ENCODE measurements at regions of chr1 and their contacts with region 1.

Region 1: DNA sequence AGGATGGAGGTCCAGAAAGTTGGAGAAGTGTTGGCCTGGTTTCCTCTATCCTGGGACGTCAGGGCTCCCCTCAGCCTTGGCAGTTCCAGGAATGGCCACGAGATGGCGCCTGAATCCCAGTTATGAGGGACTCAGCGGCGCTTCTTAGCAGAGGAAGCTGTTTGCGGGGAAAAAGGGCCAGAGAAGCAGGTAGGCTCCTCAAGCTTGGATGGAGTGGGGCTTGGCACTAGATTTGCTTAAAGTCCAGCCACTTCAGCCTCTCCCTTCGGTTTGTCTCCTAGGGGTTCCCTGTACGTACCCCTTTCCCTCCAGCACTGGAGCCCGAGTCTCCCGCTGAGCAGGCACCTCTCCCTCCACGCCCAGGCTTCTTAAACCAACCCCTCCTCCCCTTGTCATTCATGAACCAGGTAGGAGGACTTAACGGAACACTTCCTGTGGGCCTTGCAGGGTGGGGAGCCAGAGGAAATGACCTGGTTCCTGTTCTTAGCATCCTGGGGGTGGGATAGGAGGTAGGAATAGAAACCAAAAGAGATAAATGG is 32.0 kb upstream of the TENT5B start:
- DNase-seq: peak; percentile 84 to 91 (median 89)
- ATAC-seq: peak; percentile 93
- H3K4me3 ChIP-seq: no peak overlapping the region
- H3K27ac ChIP-seq: no peak overlapping the region
- H3K4me1 ChIP-seq: peaks cover 3 to 5% of the 10 kb centered on the region in 2 experiments; a peak in 2 of 5 replicates
- H3K27me3 ChIP-seq: peaks cover 0 to 5% of the 10 kb centered on the region in 2 experiments; a peak in 1 of 5 replicates
- CTCF ChIP-seq: peak; percentile 97 to 99 (median 98)
- EP300 ChIP-seq: no peak
- POLR2A ChIP-seq: no peak
- RAD21 ChIP-seq: peak; percentile 97 to 100

Region 2: GRCh38 chr1:26961826-26962225 is 82.9 kb before region 1 on chr1:
- CTCF ChIA-PET with region 1: interaction called, 4 read pairs
- POLR2A ChIA-PET with region 1: interaction called, 4 read pairs
- in situ Hi-C with region 1: no loop called
- intact Hi-C with region 1: loop called (anchors 1 kb)
- DNase-seq: no peak
- ATAC-seq: no peak
- H3K4me3 ChIP-seq: no peak overlapping the region
- H3K27ac ChIP-seq: no peak overlapping the region
- H3K4me1 ChIP-seq: peaks cover 9 to 14% of the 10 kb centered on the region in 2 experiments; a peak in 4 of 5 replicates
- H3K27me3 ChIP-seq: peaks cover 5 to 21% of the 10 kb centered on the region in 2 experiments; a peak in 4 of 5 replicates
- CTCF ChIP-seq: no peak
- EP300 ChIP-seq: no peak
- POLR2A ChIP-seq: no peak
- RAD21 ChIP-seq: no peak

Region 3: DNA sequence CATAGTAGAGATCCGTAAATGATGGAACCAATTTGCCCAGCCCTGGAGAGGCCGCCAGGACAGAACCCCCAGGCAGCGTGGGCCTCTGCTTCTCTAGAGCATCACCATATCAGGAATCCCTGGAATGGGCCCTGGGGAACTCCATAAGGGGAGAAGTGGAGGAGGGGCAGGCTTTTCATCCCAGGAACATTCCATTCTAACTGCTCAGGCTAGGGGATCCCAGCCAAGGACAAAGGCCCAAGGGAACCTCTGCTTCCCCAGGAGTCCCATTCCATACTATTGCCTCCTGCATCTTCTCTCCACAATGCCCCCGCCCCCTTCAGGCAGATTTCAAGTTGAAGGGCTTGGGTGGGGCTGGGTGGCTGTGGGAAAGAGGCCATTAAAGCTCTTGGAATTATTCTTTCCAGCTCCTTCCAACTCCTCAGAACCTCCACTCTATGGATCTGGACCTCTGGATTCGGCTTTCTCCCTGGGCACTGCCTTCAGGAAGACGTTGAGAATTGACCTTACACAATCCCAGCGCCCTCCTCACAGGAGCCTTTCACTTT is 45.2 kb before region 1 on chr1:
- CTCF ChIA-PET with region 1: interaction called, 20 read pairs
- POLR2A ChIA-PET with region 1: interaction called, 3 read pairs
- in situ Hi-C with region 1: loop called (anchors 5 kb)
- intact Hi-C with region 1: loop called (anchors 1 kb)
- DNase-seq: no peak
- ATAC-seq: no peak
- H3K4me3 ChIP-seq: no peak overlapping the region
- H3K27ac ChIP-seq: no peak overlapping the region
- H3K4me1 ChIP-seq: peaks cover 14 to 17% of the 10 kb centered on the region in 2 experiments
- H3K27me3 ChIP-seq: peaks cover 2 to 9% of the 10 kb centered on the region in 2 experiments; a peak in 4 of 5 replicates
- CTCF ChIP-seq: no peak
- EP300 ChIP-seq: no peak
- POLR2A ChIP-seq: no peak
- RAD21 ChIP-seq: no peak

Region 4: GRCh38 chr1:27097484-27097917 is 52.8 kb after region 1 on chr1:
- CTCF ChIA-PET with region 1: interaction called, 227 read pairs
- POLR2A ChIA-PET with region 1: interaction called, 16 read pairs
- in situ Hi-C with region 1: loop called (anchors 5 kb)
- intact Hi-C with region 1: loop called (anchors 1 kb)
- DNase-seq: peak; percentile 86 to 90 (median 88)
- ATAC-seq: peak; percentile 84
- H3K4me3 ChIP-seq: no peak overlapping the region
- H3K27ac ChIP-seq: no peak overlapping the region
- H3K4me1 ChIP-seq: peaks cover 18 to 41% of the 10 kb centered on the region in 2 experiments
- H3K27me3 ChIP-seq: no peaks in the 10 kb centered on the region; a peak in 1 of 5 replicates
- CTCF ChIP-seq: peak; percentile 98 to 99 (median 99)
- EP300 ChIP-seq: no peak; the same call in 1 of the 2 replicates
- POLR2A ChIP-seq: no peak
- RAD21 ChIP-seq: peak; percentile 100

Region 5: DNA sequence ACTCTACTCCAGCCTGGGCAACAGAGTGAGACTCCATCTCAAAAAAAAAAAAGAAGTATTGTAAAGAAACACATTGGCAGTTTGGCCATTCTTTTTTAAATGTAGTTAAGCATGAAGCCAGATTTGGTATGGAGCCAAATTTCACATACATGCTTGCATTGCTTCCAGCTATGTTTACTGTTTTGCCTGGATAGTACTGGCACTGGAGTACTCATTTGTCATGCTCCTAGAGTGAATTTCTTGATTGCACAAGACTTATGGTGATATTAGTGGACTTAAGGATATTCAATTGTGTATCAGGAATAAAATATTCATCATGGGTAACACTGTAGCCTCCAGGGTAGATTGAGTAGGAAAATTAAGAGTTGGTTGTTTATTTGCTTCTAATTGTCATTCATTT is 134.7 kb after region 1 on chr1:
- CTCF ChIA-PET with region 1: no interaction called
- POLR2A ChIA-PET with region 1: no interaction called
- in situ Hi-C with region 1: no loop called
- intact Hi-C with region 1: no loop called
- DNase-seq: no peak
- ATAC-seq: no peak
- H3K4me3 ChIP-seq: no peak overlapping the region
- H3K27ac ChIP-seq: no peak overlapping the region
- H3K4me1 ChIP-seq: no peaks in the 10 kb centered on the region
- H3K27me3 ChIP-seq: no peaks in the 10 kb centered on the region
- CTCF ChIP-seq: no peak
- EP300 ChIP-seq: no peak
- POLR2A ChIP-seq: no peak
- RAD21 ChIP-seq: no peak

Region 6: DNA sequence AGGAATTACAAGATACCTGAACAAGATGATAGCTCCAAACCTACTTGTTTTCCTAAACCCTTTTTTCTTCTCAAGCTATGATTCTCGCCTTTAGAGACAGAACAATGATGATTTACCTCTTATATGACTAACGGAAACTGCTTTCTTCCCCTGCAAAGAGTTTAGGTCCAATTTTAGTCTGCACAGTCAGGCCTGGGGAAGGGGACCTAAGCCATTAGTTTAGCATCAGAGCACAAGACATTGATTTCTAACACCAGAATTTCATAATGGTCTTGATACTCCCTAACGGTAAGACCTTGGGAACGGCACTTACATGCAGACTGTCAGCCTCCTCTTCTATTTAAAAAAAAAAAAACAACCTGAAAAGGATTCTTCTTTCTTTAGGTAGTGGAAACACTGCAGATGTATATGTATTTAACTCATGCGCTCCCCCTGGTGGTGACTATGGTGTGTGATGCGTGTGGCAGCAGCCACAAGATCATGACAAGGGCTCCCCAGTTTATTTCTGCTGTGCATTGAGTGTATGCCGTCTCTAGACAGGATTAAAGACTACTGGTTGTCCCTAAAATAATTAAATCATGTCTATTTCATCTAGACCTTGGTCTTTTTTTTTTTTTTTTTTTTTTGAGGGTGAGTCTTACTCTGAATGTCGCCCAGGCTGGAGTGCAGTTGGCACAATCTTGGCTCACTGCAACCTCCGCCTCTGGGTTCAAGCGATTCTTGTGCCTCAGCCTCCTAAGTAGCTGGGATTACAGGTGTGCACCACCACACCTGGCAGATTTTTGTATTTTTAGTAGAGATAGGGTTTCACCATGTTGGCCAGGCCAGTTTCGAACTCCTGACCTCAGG is 240.0 kb after region 1 on chr1:
- CTCF ChIA-PET with region 1: interaction called, 35 read pairs
- POLR2A ChIA-PET with region 1: interaction called, 3 read pairs
- in situ Hi-C with region 1: loop called (anchors 5 kb)
- intact Hi-C with region 1: loop called (anchors 2 kb)
- DNase-seq: peak; percentile 87 to 91 (median 90)
- ATAC-seq: peak; percentile 100
- H3K4me3 ChIP-seq: no peak overlapping the region
- H3K27ac ChIP-seq: no peak overlapping the region
- H3K4me1 ChIP-seq: 0 out of 5 replicates have a peak, but pooled peaks cover 0 to 2% of the 10 kb centered on the region in 2 experiments
- H3K27me3 ChIP-seq: no peaks in the 10 kb centered on the region
- CTCF ChIP-seq: peak; percentile 88 to 94 (median 89)
- EP300 ChIP-seq: no peak
- POLR2A ChIP-seq: no peak
- RAD21 ChIP-seq: peak; percentile 82 to 94

Region 7: DNA sequence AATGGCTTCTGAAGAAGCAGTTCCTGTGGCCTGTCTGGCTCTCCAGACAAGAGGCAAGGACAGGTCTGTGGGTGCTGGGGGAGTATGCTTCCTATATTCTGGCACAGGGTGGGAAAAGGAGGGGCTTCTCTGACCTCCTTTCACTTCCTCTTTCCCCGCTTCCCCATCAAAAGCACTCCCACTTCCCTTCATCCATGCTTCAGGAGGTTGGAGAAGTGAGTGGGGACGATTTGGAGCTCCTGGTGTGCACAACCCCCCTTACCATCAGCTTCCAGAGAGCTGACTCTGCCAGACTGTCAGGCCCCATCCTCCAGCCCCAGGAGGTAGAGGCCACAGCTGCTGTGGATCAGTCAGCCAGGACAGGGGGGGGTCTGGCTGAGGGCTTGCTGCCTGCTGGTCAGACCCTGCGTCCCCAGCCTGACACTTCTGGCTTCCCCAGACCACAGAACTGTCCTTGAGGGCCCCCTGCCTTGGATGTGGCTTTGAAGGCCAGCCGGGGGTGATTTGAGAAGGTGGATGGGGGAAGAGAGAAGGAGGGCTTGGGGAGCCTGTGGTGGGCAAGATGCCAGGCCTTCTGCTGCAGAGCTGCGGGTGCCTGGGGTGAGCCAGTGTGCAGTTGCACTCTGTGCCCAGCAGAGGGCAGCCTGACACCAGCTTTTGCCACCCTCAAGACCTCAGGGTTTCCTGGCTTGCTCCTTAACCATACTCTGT is 255.8 kb after region 1 on chr1:
- CTCF ChIA-PET with region 1: interaction called, 3 read pairs
- POLR2A ChIA-PET with region 1: no interaction called
- in situ Hi-C with region 1: no loop called
- intact Hi-C with region 1: loop called (anchors 5 kb)
- DNase-seq: peak; percentile 88 to 93 (median 90)
- ATAC-seq: peak; percentile 95
- H3K4me3 ChIP-seq: no peak overlapping the region
- H3K27ac ChIP-seq: no peak overlapping the region
- H3K4me1 ChIP-seq: peaks cover 0 to 7% of the 10 kb centered on the region in 2 experiments; a peak in 2 of 5 replicates
- H3K27me3 ChIP-seq: no peaks in the 10 kb centered on the region
- CTCF ChIP-seq: peak; percentile 97 to 99 (median 98)
- EP300 ChIP-seq: no peak
- POLR2A ChIP-seq: no peak
- RAD21 ChIP-seq: peak; percentile 93 to 98

Region 8: DNA sequence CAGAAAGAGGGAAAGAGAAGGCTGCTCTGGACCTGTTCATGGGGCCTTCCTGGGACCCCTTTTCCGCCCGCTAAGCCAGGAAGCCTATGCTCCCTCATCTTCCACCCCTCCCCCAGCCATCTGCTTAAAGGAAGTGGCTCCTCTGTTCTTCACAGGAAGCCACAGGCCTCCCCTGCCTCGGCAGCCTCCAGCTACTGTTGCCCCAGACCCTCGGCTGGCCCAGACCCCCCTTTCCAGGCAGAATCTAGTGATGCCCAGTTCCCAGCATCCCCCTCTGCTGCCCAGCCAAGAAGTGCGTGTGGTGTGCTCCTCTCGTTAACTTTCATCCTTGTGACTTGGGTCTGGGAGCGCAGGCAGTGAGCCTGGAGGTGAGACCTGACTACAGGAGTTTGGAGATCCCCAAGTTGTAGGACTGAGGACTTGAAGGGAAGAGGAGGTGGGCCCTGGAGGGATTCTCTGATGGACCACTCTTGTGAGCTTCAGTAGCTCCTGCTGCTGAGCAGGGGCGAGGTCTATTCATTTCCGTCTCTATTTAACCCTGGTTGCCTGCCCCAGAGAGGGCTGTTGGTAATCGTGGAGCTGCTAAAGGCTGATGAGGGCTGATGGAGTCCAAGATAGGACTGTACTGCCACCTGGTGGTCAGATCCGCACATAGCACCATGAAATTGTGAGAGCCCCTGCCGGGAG is 618.2 kb after region 1 on chr1:
- CTCF ChIA-PET with region 1: no interaction called
- POLR2A ChIA-PET with region 1: no interaction called
- in situ Hi-C with region 1: no loop called
- intact Hi-C with region 1: loop called (anchors 10 kb)
- DNase-seq: peak; percentile 75 to 91 (median 82)
- ATAC-seq: peak; percentile 76
- H3K4me3 ChIP-seq: no peak overlapping the region
- H3K27ac ChIP-seq: peak overlapping the region; percentile 30; the same call in 2 of the 3 replicates
- H3K4me1 ChIP-seq: peaks cover 27 to 39% of the 10 kb centered on the region in 2 experiments
- H3K27me3 ChIP-seq: no peaks in the 10 kb centered on the region
- CTCF ChIP-seq: peak; percentile 92 to 97 (median 96)
- EP300 ChIP-seq: no peak
- POLR2A ChIP-seq: no peak
- RAD21 ChIP-seq: peak; percentile 98 to 99

Measured in K562 (cell line).